Gastrocnemius medialis (tissue), 4 donors: ENCODE measurements at regions of chr16 and their contacts with region 1.

Region 1: GRCh38 chr16:66070140-66070917 is 296.2 kb upstream of the CDH5 start:
- DNase-seq: peak; percentile 72 to 87
- ATAC-seq: peak; percentile 98
- H3K4me3 ChIP-seq: no peak overlapping the region
- H3K27ac ChIP-seq: peak overlapping the region; percentile 12 to 53 (median 44)
- H3K4me1 ChIP-seq: peaks cover 14 to 27% of the 10 kb centered on the region in 2 donors
- H3K27me3 ChIP-seq: no peaks in the 10 kb centered on the region
- CTCF ChIP-seq: no peak
- POLR2A ChIP-seq: no peak

Region 2: GRCh38 chr16:66036793-66037715 is 33.3 kb before region 1 on chr16:
- in situ Hi-C with region 1: no loop called
- intact Hi-C with region 1: loop called (anchors 1 kb)
- DNase-seq: peak; percentile 76 to 82
- ATAC-seq: peak; percentile 92
- H3K4me3 ChIP-seq: no peak overlapping the region
- H3K27ac ChIP-seq: peak overlapping the region; percentile 66 to 81 (median 69)
- H3K4me1 ChIP-seq: peaks cover 16 to 27% of the 10 kb centered on the region in 2 donors
- H3K27me3 ChIP-seq: no peaks in the 10 kb centered on the region
- CTCF ChIP-seq: no peak
- POLR2A ChIP-seq: no peak